Naive thymus-derived CD4-positive, alpha-beta T cell (primary cell): ENCODE measurements at regions of chr22 and their contacts with region 1.

Region 1: GRCh38 chr22:25736378-25737011 is 5.5 kb upstream of the MYO18B start:
- DNase-seq: peak in 7 of 9 donors; percentile 48 to 66 (median 57)
- ATAC-seq: peak; percentile 36
- H3K4me3 ChIP-seq: peak overlapping the region; percentile 31
- H3K4me3 Mint-ChIP-seq: peak overlapping the region; percentile 47 to 81 (median 70)
- H3K27ac ChIP-seq: no peak overlapping the region
- H3K27ac Mint-ChIP-seq: peak overlapping the region; percentile 51 to 98 (median 84)
- H3K4me1 ChIP-seq: peaks cover 0 to 13% of the 10 kb centered on the region in 2 donors
- H3K4me1 Mint-ChIP-seq: peaks cover 7 to 64% (median 21%) of the 10 kb centered on the region in 7 donors
- H3K27me3 ChIP-seq: no peaks in the 10 kb centered on the region
- H3K27me3 Mint-ChIP-seq: no peaks in the 10 kb centered on the region

Region 2: GRCh38 chr22:25709758-25710157 is 26.7 kb before region 1 on chr22:
- CTCF ChIA-PET with region 1: no interaction called
- POLR2A ChIA-PET with region 1: no interaction called
- intact Hi-C with region 1: loop called in 1 of 2 experiments (anchors 2 kb)
- DNase-seq: peak in 3 of 9 donors; percentile 4 to 36 (median 16)
- ATAC-seq: peak; percentile 22
- H3K4me3 ChIP-seq: no peak overlapping the region
- H3K4me3 Mint-ChIP-seq: peak overlapping the region in 1 of 10 donors; percentile 69
- H3K27ac ChIP-seq: no peak overlapping the region
- H3K27ac Mint-ChIP-seq: peak overlapping the region in 7 of 9 donors; percentile 2 to 92 (median 23)
- H3K4me1 ChIP-seq: no peaks in the 10 kb centered on the region
- H3K4me1 Mint-ChIP-seq: peaks cover 0 to 56% (median 5%) of the 10 kb centered on the region in 7 donors
- H3K27me3 ChIP-seq: no peaks in the 10 kb centered on the region
- H3K27me3 Mint-ChIP-seq: no peaks in the 10 kb centered on the region

Region 3: GRCh38 chr22:25749420-25750169 is 13.1 kb after region 1 on chr22:
- CTCF ChIA-PET with region 1: interaction called, 5 read pairs
- POLR2A ChIA-PET with region 1: no interaction called
- intact Hi-C with region 1: loop called in 1 of 2 experiments (anchors 1 kb)
- DNase-seq: peak in 1 of 9 donors; percentile 50
- ATAC-seq: no peak
- H3K4me3 ChIP-seq: no peak overlapping the region
- H3K4me3 Mint-ChIP-seq: peak overlapping the region in 1 of 10 donors; percentile 83
- H3K27ac ChIP-seq: no peak overlapping the region
- H3K27ac Mint-ChIP-seq: peak overlapping the region in 2 of 9 donors; percentile 47 to 99
- H3K4me1 ChIP-seq: no peaks in the 10 kb centered on the region
- H3K4me1 Mint-ChIP-seq: peaks cover 0 to 60% (median 0%) of the 10 kb centered on the region in 7 donors
- H3K27me3 ChIP-seq: no peaks in the 10 kb centered on the region
- H3K27me3 Mint-ChIP-seq: peaks cover 0 to 10% (median 0%) of the 10 kb centered on the region in 5 donors